ENCODE measurements at regions of chr13 and their contacts with region 1.

Region 1: GRCh38 chr13:48769107-48769704 is 115.5 kb downstream of the CYSLTR2 start:
- DNase-seq: peak; percentile 74
- H3K4me3 ChIP-seq: no peak overlapping the region
- H3K27ac ChIP-seq: no peak overlapping the region
- H3K4me1 ChIP-seq: no peaks in the 10 kb centered on the region
- H3K27me3 ChIP-seq: no peaks in the 10 kb centered on the region
- CTCF ChIP-seq: peak; percentile 100

Region 2: DNA sequence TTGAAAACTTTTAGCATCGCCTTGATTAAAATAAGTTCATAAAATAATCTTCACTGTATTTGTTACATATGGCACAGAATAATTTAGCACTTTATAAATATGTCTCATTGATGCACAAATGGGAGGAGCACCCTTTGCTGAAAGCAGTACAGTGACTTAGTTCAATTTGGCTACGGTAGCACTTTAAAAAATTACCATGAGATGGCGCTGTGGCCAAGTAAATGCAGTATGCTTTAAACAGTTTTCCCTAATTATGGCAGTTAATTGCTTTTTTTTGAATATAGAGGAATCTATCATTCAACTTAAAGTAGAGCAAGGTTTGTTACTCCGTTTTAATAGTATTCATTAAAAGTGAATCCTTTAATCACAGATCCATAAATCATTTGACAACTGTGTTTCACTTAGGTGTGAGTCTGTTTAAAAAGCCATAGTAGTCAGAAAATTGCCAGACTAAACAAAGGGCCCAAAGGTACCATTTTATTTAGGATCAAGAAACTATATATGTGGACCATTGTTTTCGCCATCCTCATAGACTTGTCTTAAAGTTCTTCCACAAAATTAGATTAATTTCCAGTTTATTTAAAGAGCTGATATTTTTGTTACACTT is 1937.5 kb before region 1 on chr13:
- CTCF ChIA-PET with region 1: no interaction called
- dilution Hi-C with region 1: no loop called
- in situ Hi-C with region 1: no loop called
- intact Hi-C with region 1: loop called (anchors 5 kb)
- DNase-seq: peak; percentile 37
- H3K4me3 ChIP-seq: no peak overlapping the region
- H3K27ac ChIP-seq: no peak overlapping the region
- H3K4me1 ChIP-seq: no peaks in the 10 kb centered on the region
- H3K27me3 ChIP-seq: no peaks in the 10 kb centered on the region
- CTCF ChIP-seq: peak; percentile 78 to 79

Region 3: DNA sequence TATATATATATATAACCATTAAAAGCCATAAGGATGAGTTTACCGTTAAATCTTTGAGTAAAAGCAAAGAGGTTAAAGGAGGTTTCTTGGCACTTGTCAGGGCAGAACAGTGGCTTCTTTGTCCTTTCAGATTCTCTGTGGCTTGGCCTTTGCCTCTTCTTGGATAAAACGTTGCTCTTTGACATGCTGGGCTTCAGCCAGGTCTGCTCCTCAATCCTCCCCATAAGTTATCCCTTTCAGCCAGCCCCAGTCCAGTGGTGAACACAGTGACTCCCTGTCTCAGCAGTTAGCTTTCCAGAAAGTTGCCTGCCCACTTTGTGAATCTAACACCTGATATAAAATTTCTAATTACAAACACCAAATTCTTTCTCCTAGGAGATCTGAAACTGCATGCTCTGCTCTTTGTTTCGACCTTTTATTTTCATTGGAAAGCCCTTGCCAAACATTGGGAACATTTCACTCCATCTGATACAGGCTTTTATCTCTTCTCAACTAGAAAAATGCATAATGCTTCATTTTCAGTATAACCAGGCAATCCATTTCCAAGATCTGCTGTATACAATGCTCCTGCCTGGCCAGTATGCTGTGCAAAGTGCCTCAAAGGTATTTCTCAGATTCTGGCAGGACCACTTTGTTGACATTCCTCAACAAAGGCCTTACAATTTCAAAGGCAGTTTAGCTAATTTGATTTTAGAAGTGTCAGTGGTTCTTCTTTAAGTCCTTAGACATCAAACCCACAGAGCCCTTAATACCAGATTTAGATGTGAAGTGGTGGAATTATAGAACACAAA is 658.1 kb before region 1 on chr13:
- CTCF ChIA-PET with region 1: no interaction called
- dilution Hi-C with region 1: no loop called
- in situ Hi-C with region 1: loop called in 1 of 2 experiments (anchors 25 kb)
- intact Hi-C with region 1: no loop called
- DNase-seq: peak; percentile 27
- H3K4me3 ChIP-seq: no peak overlapping the region
- H3K27ac ChIP-seq: no peak overlapping the region
- H3K4me1 ChIP-seq: peaks cover 28% of the 10 kb centered on the region
- H3K27me3 ChIP-seq: no peaks in the 10 kb centered on the region
- CTCF ChIP-seq: no peak

Region 4: GRCh38 chr13:48334534-48335127 is 434.6 kb before region 1 on chr13:
- CTCF ChIA-PET with region 1: interaction called, 15 read pairs
- dilution Hi-C with region 1: no loop called
- in situ Hi-C with region 1: no loop called
- intact Hi-C with region 1: loop called (anchors 1 kb)
- DNase-seq: peak; percentile 17
- H3K4me3 ChIP-seq: no peak overlapping the region
- H3K27ac ChIP-seq: peak overlapping the region; percentile 59
- H3K4me1 ChIP-seq: peaks cover 17% of the 10 kb centered on the region
- H3K27me3 ChIP-seq: no peaks in the 10 kb centered on the region
- CTCF ChIP-seq: peak; percentile 42 to 59

Region 5: DNA sequence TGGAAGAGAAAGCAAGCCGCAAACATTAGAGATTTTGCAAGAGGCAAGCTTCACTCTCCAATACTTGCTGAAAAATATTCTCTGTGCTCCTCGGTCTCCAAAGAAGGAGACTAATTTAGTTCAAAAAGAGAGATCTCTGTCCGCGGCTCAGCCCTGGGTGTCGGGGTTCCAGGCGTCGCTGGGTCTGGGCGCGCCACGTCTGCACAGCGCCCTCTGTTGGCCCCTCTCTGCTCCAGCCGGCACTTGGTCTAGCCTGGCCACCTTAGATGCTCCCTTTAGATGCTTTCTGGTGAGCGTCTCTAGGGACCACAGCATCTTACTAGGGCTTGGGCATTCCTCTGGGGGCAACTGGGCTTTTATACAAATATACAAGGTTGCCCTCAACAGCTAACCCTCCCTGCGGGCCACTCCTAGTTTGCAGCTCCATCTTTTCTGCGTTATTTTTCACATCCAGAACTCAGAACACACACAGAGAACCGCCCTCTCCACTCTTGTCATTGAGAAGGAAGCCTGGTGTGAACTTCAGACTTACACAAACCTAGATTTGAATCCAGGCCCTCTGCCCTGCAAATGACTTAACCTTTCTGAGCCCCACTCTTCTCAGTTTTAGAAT is 37.1 kb before region 1 on chr13:
- CTCF ChIA-PET with region 1: no interaction called
- dilution Hi-C with region 1: no loop called
- in situ Hi-C with region 1: no loop called
- intact Hi-C with region 1: loop called (anchors 1 kb)
- DNase-seq: peak; percentile 12
- H3K4me3 ChIP-seq: no peak overlapping the region
- H3K27ac ChIP-seq: no peak overlapping the region
- H3K4me1 ChIP-seq: no peaks in the 10 kb centered on the region
- H3K27me3 ChIP-seq: no peaks in the 10 kb centered on the region
- CTCF ChIP-seq: peak; percentile 55 to 62

Region 6: DNA sequence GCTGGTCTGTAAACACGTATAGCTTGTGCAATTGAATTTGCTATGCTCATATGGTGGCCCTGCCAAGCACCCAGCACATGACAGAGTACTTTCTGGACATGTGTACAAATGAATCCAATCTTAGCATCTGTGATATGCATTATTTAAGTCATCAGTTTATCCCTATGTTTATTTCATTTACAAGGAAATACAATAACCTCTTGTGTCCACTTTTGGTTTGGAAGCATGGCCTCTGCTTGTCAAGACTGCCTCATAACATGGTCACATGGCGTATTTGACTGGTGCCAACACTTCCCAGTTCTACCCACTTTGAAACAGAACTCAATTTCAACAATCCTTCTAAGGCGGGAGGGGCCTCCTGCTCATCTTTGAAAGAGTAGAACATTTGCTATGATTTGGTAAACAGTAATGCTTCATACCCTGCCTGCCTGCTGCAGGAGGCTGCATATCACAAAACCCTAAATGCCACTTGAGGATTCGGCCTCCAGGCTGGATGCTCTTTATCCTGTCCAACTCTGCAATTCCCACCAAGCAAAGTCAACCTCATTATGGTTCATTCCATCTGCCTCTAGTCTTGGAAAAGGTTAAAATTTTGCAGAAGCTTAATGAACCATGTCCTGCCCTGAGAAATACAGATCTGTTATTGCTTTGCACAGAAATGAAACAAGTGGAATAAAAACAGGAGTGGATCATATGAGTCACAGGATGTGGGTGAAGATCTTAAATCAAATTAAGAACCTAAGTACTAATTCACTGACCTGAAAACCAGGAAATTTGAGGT is 35.8 kb after region 1 on chr13:
- CTCF ChIA-PET with region 1: no interaction called
- dilution Hi-C with region 1: no loop called
- in situ Hi-C with region 1: no loop called
- intact Hi-C with region 1: no loop called
- DNase-seq: no peak
- H3K4me3 ChIP-seq: no peak overlapping the region
- H3K27ac ChIP-seq: no peak overlapping the region
- H3K4me1 ChIP-seq: no peaks in the 10 kb centered on the region
- H3K27me3 ChIP-seq: no peaks in the 10 kb centered on the region
- CTCF ChIP-seq: no peak

Region 7: GRCh38 chr13:48828962-48829421 is 59.8 kb after region 1 on chr13:
- CTCF ChIA-PET with region 1: no interaction called
- dilution Hi-C with region 1: no loop called
- in situ Hi-C with region 1: no loop called
- intact Hi-C with region 1: no loop called
- DNase-seq: peak; percentile 67
- H3K4me3 ChIP-seq: no peak overlapping the region
- H3K27ac ChIP-seq: no peak overlapping the region
- H3K4me1 ChIP-seq: peaks cover 9% of the 10 kb centered on the region
- H3K27me3 ChIP-seq: no peaks in the 10 kb centered on the region
- CTCF ChIP-seq: no peak

Region 8: GRCh38 chr13:49436890-49437289 is 667.7 kb after region 1 on chr13:
- CTCF ChIA-PET with region 1: no interaction called
- dilution Hi-C with region 1: no loop called
- in situ Hi-C with region 1: no loop called
- intact Hi-C with region 1: loop called (anchors 5 kb)
- DNase-seq: peak; percentile 29
- H3K4me3 ChIP-seq: no peak overlapping the region
- H3K27ac ChIP-seq: no peak overlapping the region
- H3K4me1 ChIP-seq: no peaks in the 10 kb centered on the region
- H3K27me3 ChIP-seq: no peaks in the 10 kb centered on the region
- CTCF ChIP-seq: no peak